CD8-positive, alpha-beta memory T cell (primary cell): ENCODE measurements at regions of chr2 and their contacts with region 1.

Region 1: DNA sequence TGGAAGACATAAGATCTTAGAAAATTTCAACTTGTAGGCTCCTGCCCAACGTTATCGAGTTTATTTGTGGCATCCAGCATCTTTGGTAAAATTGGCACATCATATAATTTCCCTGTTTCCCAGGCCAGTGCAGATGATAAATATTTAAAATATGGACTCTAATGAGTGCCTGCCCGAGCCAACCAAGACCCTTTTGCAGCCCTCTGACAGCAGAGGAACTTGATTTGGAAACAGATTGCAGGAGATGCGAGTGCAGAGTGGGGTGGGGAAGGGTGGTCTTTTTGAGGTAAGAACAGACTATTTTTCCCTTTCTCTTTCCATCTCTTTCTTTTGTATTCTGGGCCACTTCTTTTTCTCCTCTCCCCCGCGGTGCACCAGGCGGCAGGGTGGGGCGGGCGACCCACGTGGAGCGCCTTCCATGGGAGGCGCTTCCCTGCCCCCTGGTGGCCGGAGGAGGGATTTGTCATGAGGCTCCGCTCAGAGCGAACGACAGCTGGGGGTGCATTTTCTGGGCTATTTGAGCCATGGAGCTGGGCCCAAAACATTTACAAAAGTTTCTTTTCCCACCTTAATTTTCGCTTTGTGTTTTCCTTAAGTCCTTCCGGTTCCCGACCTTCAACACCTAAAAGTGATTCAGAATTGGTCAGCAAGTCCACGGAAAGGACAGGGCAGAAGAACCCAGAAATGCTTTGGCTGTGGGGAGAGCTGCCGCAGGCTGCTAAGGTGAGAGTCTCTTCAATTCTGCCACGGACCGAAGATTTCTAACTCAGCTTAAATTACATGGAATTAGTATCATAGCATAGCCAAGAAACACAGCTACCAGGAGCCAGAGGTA is 32.7 kb downstream of the LPIN1 start:
- DNase-seq: peak; percentile 73 to 89 (median 81)
- H3K4me3 ChIP-seq: peak overlapping the region; percentile 50
- H3K4me3 Mint-ChIP-seq: peak overlapping the region; percentile 64 to 74 (median 69)
- H3K27ac ChIP-seq: no peak overlapping the region
- H3K27ac Mint-ChIP-seq: peak overlapping the region; percentile 3 to 90 (median 82)
- H3K4me1 ChIP-seq: peaks cover 28% of the 10 kb centered on the region
- H3K4me1 Mint-ChIP-seq: peaks cover 32 to 47% (median 46%) of the 10 kb centered on the region in 3 donors
- H3K27me3 ChIP-seq: no peaks in the 10 kb centered on the region
- H3K27me3 Mint-ChIP-seq: no peaks in the 10 kb centered on the region

Region 2: DNA sequence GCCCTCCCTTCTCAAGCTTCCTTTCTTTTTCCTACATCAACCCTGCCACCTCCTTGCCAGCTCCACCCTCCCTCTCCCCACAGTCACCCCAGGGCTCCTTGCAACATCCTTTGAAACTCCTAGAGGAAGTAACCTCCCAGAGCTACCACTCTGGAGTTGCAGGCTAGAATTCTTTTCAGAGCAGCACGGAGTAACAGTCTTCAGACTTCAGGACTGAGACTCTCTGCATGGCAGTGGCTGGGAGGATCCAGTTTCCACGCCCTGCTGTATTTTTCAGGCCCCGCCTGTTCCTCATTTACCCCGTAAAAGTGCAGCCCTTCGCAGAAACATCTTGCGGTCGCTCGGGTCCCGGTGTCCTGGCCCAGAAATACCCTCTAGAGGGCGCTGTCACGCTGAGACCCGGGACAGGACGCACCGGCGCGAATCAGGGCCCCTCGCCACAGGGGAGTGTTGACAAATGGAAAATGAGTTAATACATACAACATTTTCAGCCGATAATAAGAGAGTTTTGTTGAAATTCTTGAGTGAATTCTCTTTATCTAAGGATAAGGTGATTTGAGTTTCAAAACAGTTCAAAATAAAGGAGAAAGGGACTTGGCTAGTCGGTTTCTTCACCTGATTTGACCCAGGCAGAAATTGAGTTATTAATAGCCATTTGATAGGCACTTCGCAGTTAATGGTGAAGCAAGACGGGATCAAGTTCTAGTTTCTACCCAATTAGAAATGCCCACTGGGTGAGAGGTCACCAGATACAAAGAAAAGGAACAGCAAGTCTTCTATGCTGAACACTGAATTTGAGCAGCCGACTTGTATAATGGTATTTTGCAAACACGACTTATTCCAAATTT is 90.7 kb before region 1 on chr2:
- CTCF ChIA-PET with region 1: interaction called, 99 read pairs
- POLR2A ChIA-PET with region 1: no interaction called
- DNase-seq: peak; percentile 68 to 79 (median 71)
- H3K4me3 ChIP-seq: no peak overlapping the region
- H3K4me3 Mint-ChIP-seq: peak overlapping the region in 6 of 7 donors; percentile 19 to 64 (median 46)
- H3K27ac ChIP-seq: no peak overlapping the region
- H3K27ac Mint-ChIP-seq: no peak overlapping the region
- H3K4me1 ChIP-seq: peaks cover 7% of the 10 kb centered on the region
- H3K4me1 Mint-ChIP-seq: peaks cover 11 to 15% (median 14%) of the 10 kb centered on the region in 3 donors
- H3K27me3 ChIP-seq: no peaks in the 10 kb centered on the region
- H3K27me3 Mint-ChIP-seq: peaks cover 7 to 25% of the 10 kb centered on the region in 2 donors

Region 3: DNA sequence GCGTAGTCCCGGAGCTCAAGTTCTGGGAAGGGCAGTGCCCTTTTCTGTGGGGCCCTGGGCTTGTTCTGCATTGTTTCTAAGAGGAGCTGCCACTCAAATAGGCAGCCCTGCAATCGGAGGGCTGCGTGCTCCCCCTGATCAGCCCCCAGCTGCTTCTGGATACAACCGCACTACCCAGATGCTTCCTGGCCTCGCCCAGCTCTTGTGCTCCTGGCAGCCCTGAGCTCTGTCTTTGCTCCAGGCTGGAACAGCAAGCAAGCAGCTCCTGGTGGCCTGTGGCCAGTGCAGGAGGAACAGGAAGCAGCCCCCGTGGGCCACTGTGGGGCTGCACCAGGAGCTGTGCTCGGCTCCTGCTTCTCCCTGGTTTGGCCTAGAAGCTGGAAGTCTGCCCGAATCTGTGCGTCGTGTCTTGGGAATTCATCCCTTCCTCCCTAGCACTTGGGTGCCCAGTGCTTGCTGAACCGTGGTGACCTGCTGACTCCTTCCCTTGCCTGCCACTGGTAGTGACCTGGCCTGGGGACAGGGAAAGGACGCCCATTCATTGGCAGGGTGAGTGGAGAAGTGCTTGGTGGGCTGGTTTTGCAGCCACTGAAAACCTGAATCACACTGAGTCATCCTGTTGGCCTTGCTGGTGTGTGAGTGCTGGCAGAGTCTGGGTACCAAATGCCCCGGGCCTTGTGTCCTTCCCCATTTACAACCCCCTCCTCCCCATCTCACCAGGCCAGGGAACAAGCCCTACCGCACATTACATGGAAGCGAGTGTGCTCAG is 81.9 kb before region 1 on chr2:
- CTCF ChIA-PET with region 1: interaction called, 99 read pairs
- POLR2A ChIA-PET with region 1: no interaction called
- DNase-seq: no peak
- H3K4me3 ChIP-seq: no peak overlapping the region
- H3K4me3 Mint-ChIP-seq: no peak overlapping the region
- H3K27ac ChIP-seq: no peak overlapping the region
- H3K27ac Mint-ChIP-seq: no peak overlapping the region
- H3K4me1 ChIP-seq: no peaks in the 10 kb centered on the region
- H3K4me1 Mint-ChIP-seq: peaks cover 2 to 5% (median 4%) of the 10 kb centered on the region in 3 donors
- H3K27me3 ChIP-seq: no peaks in the 10 kb centered on the region
- H3K27me3 Mint-ChIP-seq: no peaks in the 10 kb centered on the region

Region 4: DNA sequence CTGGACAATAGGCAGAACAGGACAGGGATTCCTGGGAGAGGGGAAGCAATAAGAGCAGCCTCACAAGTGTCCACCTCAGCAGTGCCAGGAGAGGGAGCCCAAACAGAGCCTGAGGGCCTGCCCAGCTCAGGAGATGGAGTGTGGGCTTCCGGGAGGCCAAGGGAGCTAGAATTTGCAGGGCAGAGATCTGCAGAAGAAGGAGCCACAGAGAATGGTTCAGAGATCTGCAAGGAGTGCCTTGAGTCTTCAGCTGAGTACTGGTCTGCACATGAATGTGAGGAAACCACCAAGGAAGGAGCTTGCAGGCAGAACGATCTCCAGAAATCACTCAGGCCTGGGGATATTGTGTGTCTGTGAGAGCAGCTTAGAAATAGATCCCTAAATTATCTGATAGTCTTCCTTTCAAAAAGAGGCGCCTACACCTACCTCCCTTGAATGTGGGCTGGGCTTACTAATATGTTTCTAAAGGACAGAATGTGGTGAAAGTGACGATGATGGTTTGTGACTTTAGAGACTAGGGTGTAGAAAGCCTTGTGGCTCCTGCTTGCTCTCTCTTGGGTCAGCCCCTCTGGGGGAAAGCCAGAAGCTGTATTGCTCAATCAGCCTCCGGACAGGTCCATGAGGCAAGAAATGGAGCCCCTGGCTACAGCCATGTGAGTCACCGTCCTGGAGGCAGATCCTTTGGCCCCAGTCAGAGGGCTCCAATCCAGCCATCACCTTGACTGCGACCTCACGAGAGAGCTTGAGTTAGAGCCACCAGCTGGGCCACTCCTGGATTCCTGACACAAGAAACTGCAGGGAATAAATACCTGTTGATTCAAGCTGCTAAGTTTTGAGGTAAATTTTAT is 40.3 kb before region 1 on chr2:
- CTCF ChIA-PET with region 1: interaction called, 70 read pairs
- POLR2A ChIA-PET with region 1: interaction called, 5 read pairs
- DNase-seq: peak in 3 of 5 donors; percentile 12 to 63 (median 14)
- H3K4me3 ChIP-seq: no peak overlapping the region
- H3K4me3 Mint-ChIP-seq: no peak overlapping the region
- H3K27ac ChIP-seq: no peak overlapping the region
- H3K27ac Mint-ChIP-seq: peak overlapping the region in 3 of 8 donors; percentile 23 to 44 (median 33)
- H3K4me1 ChIP-seq: peaks cover 5% of the 10 kb centered on the region
- H3K4me1 Mint-ChIP-seq: peaks cover 8 to 13% (median 9%) of the 10 kb centered on the region in 3 donors
- H3K27me3 ChIP-seq: no peaks in the 10 kb centered on the region
- H3K27me3 Mint-ChIP-seq: peaks cover 1 to 9% of the 10 kb centered on the region in 2 donors

Region 5: GRCh38 chr2:11743846-11744553 is 35.1 kb before region 1 on chr2:
- CTCF ChIA-PET with region 1: interaction called, 70 read pairs
- POLR2A ChIA-PET with region 1: interaction called, 5 read pairs
- DNase-seq: peak; percentile 15 to 85 (median 69)
- H3K4me3 ChIP-seq: peak overlapping the region; percentile 16
- H3K4me3 Mint-ChIP-seq: peak overlapping the region; percentile 59 to 95 (median 76)
- H3K27ac ChIP-seq: peak overlapping the region; percentile 64
- H3K27ac Mint-ChIP-seq: peak overlapping the region; percentile 54 to 95 (median 89)
- H3K4me1 ChIP-seq: peaks cover 47% of the 10 kb centered on the region
- H3K4me1 Mint-ChIP-seq: peaks cover 44 to 53% (median 48%) of the 10 kb centered on the region in 3 donors
- H3K27me3 ChIP-seq: no peaks in the 10 kb centered on the region
- H3K27me3 Mint-ChIP-seq: no peaks in the 10 kb centered on the region

Region 6: GRCh38 chr2:11753886-11754699 is 25.0 kb before region 1 on chr2:
- CTCF ChIA-PET with region 1: interaction called, 43 read pairs
- POLR2A ChIA-PET with region 1: interaction called, 4 read pairs
- DNase-seq: peak; percentile 47 to 80 (median 49)
- H3K4me3 ChIP-seq: peak overlapping the region; percentile 49
- H3K4me3 Mint-ChIP-seq: peak overlapping the region; percentile 79 to 95 (median 84)
- H3K27ac ChIP-seq: peak overlapping the region; percentile 71
- H3K27ac Mint-ChIP-seq: peak overlapping the region; percentile 93 to 99 (median 95)
- H3K4me1 ChIP-seq: peaks cover 92% of the 10 kb centered on the region
- H3K4me1 Mint-ChIP-seq: peaks cover 83 to 95% (median 93%) of the 10 kb centered on the region in 3 donors
- H3K27me3 ChIP-seq: no peaks in the 10 kb centered on the region
- H3K27me3 Mint-ChIP-seq: peaks cover 0 to under 1% of the 10 kb centered on the region in 2 donors

Region 7: GRCh38 chr2:11904029-11904428 is 124.9 kb after region 1 on chr2:
- CTCF ChIA-PET with region 1: no interaction called
- POLR2A ChIA-PET with region 1: no interaction called
- DNase-seq: no peak
- H3K4me3 ChIP-seq: no peak overlapping the region
- H3K4me3 Mint-ChIP-seq: no peak overlapping the region
- H3K27ac ChIP-seq: no peak overlapping the region
- H3K27ac Mint-ChIP-seq: no peak overlapping the region
- H3K4me1 ChIP-seq: no peaks in the 10 kb centered on the region
- H3K4me1 Mint-ChIP-seq: no peaks in the 10 kb centered on the region
- H3K27me3 ChIP-seq: no peaks in the 10 kb centered on the region
- H3K27me3 Mint-ChIP-seq: peaks cover 1 to 3% of the 10 kb centered on the region in 2 donors